ENCODE measurements at regions of chr18 and their contacts with region 1.

Region 1: DNA sequence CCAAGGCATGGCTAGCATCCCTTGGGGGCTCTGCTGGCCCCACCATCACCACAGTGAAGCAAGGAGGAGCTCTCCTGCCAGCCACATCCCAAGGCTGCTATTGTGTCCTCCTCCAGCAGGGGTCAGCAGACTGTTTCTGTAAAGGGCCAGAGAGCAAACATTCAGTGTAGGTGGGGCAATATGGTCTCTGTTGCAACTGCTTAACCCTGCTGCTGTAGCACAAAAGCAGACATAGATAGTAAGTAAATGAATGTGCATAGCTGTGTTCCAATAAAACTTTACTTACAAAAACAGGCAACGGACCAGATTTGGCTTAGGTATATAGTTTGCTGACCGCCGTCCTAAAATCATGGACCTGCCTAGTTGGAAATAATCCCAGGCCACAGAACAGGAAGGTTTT is 36.4 kb upstream of the ZBTB7C start:
- DNase-seq: peak; percentile 48 to 70 (median 58)
- ATAC-seq: peak; percentile 94
- H3K4me3 ChIP-seq: no peak overlapping the region
- H3K27ac ChIP-seq: no peak overlapping the region
- H3K4me1 ChIP-seq: no peaks in the 10 kb centered on the region
- H3K27me3 ChIP-seq: peaks cover 2 to 20% of the 10 kb centered on the region in 2 experiments; a peak in 4 of 5 replicates
- CTCF ChIP-seq: peak; percentile 74 to 80 (median 79)
- EP300 ChIP-seq: no peak
- POLR2A ChIP-seq: no peak
- RAD21 ChIP-seq: peak; percentile 21 to 60; a peak in 3 of 4 replicates

Region 2: DNA sequence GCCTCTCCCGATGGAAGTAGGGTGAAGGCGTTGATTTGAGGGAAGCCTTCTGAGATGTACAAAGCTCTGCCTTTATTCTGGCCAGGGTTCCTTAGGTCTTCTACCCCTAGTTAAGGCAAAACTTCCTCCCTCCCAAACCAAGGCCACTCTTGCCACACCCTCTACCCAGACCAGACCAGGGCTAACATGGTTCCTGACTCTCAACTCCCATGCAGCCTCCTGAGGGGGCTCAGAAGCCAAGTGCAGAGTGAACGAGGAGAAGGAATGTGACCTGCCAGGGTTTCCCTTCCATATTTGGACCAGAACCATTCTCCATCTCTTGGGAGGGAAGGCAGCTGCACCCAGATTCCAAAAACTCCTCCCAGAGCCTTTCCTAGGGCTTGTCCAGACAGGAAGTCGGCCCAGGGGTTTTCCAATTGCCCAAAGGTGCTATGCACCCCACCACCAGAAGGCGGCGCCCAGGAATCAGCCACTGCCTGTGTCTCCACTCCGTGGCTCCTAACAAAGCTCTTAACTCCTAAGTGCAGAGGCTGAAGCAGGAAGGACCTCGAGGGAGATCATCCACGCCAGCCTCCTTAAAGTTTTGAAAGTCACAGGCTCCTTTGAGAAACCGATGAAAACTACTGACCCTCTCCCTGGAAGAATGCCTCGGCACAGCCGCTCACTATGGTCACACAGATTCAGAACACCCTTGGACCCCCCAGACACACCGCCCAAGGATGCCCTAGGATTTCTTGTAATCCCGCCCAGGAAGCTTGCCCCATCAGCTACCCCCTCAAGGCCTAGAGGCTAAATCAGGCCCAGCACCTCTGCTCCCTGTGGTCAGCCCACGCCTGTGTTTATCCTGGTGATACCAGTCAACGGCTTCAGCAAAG is 672.9 kb before region 1 on chr18:
- CTCF ChIA-PET with region 1: no interaction called
- POLR2A ChIA-PET with region 1: no interaction called
- in situ Hi-C with region 1: loop called (anchors 10 kb)
- intact Hi-C with region 1: loop called (anchors 10 kb)
- DNase-seq: peak; percentile 47 to 65 (median 52)
- ATAC-seq: peak; percentile 89
- H3K4me3 ChIP-seq: no peak overlapping the region
- H3K27ac ChIP-seq: no peak overlapping the region
- H3K4me1 ChIP-seq: no peaks in the 10 kb centered on the region
- H3K27me3 ChIP-seq: peaks cover 0 to 4% of the 10 kb centered on the region in 2 experiments; a peak in 2 of 5 replicates
- CTCF ChIP-seq: peak; percentile 80 to 85 (median 81)
- EP300 ChIP-seq: no peak
- POLR2A ChIP-seq: no peak
- RAD21 ChIP-seq: peak; percentile 54 to 86

Region 3: DNA sequence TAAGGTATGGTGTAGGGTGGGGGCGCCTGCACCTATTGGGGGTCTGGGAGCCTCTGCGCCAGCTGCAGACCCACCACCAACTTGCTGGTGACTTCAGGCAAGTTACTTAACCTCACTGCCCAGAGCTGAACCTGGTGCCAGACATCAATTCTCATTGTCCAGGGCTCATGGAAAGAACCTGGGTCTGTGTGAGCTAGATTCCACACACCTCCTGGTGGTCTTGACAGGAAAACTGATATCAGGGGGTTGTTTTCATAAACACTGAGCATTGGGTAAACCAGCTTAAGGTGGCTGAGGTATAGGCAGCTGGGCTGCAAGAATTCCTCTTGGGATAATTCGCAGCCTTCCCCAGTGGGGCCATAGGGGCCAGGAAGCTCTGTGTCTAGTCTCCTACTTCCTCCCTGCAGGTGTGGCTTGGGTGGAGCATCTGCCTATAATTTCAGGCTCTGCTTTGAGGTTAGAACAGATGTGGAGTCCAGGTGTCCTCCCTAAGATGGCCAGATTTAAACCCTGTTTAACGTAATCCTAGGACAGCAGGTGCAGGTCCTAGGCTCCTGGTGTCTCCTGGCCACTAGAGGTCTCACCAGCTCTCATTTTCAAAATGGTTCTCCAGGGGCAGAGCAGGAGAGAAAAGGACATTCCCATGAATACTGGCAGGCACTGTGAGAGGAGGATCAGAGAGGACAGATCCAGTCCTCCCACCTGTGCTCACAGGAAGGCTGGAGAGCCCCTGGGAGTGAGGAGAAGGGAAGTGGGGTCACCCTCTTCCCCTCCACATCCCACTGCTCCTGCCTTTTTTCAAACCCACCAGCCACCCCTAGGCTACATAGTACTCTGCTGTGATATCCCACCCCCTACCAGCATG is 414.7 kb before region 1 on chr18:
- CTCF ChIA-PET with region 1: interaction called, 4 read pairs
- POLR2A ChIA-PET with region 1: no interaction called
- in situ Hi-C with region 1: loop called (anchors 10 kb)
- intact Hi-C with region 1: loop called (anchors 5 kb)
- DNase-seq: peak; percentile 28 to 44 (median 38)
- ATAC-seq: peak; percentile 89
- H3K4me3 ChIP-seq: no peak overlapping the region
- H3K27ac ChIP-seq: no peak overlapping the region
- H3K4me1 ChIP-seq: peaks cover 0 to 6% of the 10 kb centered on the region in 2 experiments; a peak in 2 of 5 replicates
- H3K27me3 ChIP-seq: peaks cover 0 to 53% of the 10 kb centered on the region in 2 experiments; a peak in 2 of 5 replicates
- CTCF ChIP-seq: peak; percentile 47 to 64 (median 62)
- EP300 ChIP-seq: no peak
- POLR2A ChIP-seq: no peak
- RAD21 ChIP-seq: peak; percentile 39 to 64

Region 4: DNA sequence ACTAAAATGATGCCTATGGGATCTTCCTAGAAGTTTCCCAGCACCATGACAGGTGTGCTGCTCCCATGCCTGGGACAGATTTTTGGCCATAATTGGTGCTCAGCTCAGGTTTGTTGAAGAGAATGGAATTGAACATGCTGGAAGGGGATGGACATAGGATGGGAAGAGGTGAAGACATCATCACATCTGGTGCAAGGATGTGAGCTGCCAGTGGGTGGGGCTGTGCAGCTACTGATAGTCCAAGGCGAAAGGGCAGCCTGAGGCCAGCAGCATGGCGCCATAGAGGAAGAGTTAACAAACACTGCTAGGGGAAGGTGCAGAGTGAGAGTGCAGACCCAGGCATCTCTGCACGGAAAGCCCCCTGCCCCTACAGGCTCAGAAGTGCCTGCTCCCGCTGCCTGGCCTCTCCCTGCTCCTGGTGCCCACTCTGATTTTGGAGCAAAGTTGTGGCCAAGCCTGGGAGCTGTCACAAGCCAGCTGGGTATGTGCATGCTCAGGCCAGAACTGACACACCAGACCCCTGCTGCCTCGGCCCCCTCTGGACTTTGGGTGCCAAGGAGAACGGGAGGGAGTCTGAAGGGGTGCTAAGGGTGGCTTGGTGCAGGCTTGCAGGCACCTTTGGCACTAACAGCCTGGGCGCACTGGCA is 214.9 kb before region 1 on chr18:
- CTCF ChIA-PET with region 1: interaction called, 11 read pairs
- POLR2A ChIA-PET with region 1: no interaction called
- in situ Hi-C with region 1: no loop called
- intact Hi-C with region 1: loop called (anchors 1 kb)
- DNase-seq: peak; percentile 34 to 51 (median 44)
- ATAC-seq: peak; percentile 90
- H3K4me3 ChIP-seq: no peak overlapping the region
- H3K27ac ChIP-seq: no peak overlapping the region
- H3K4me1 ChIP-seq: no peaks in the 10 kb centered on the region
- H3K27me3 ChIP-seq: no peaks in the 10 kb centered on the region
- CTCF ChIP-seq: peak; percentile 59 to 80 (median 71)
- EP300 ChIP-seq: no peak
- POLR2A ChIP-seq: no peak
- RAD21 ChIP-seq: peak; percentile 63 to 69

Region 5: DNA sequence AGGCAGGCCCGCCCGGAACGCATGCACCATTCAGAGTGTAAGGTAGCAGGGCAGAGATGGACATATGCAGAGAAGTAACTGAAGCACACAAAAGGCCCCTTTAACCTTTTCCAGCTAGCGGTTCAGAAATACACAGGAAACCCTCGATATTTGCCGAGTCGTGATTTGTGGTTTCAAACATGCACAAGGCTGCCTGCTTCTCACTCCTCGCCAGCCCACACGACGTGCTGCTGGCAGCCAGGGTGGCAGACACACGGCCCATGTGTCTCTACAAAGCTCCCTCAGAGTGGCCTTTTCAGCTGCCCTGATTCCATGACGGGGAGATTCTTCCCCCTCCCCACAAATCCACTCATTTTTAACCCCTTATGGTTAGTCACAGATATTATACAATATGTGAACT is 59.9 kb before region 1 on chr18:
- CTCF ChIA-PET with region 1: no interaction called
- POLR2A ChIA-PET with region 1: no interaction called
- in situ Hi-C with region 1: no loop called
- intact Hi-C with region 1: no loop called
- DNase-seq: no peak
- ATAC-seq: no peak
- H3K4me3 ChIP-seq: no peak overlapping the region
- H3K27ac ChIP-seq: no peak overlapping the region
- H3K4me1 ChIP-seq: no peaks in the 10 kb centered on the region
- H3K27me3 ChIP-seq: peaks cover 2 to 10% of the 10 kb centered on the region in 2 experiments; a peak in 3 of 5 replicates
- CTCF ChIP-seq: no peak
- EP300 ChIP-seq: no peak
- POLR2A ChIP-seq: no peak
- RAD21 ChIP-seq: no peak